ENCODE measurements at regions of chr1 and their contacts with region 1.

Region 1: GRCh38 chr1:1471389-1472052 is at the start of gene ATAD3B:
- H3K4me3 Mint-ChIP-seq: peak within 1 kb of the TSS; percentile 82
- H3K27ac Mint-ChIP-seq: peak within 1 kb of the TSS; percentile 86
- H3K4me1 Mint-ChIP-seq: peaks cover 29% of the 10 kb centered on the region
- H3K27me3 Mint-ChIP-seq: no peaks in the 10 kb centered on the region

Region 2: GRCh38 chr1:1349256-1350012 is 122.1 kb before region 1 on chr1 and contains the start of gene DVL1:
- intact Hi-C with region 1: no loop called
- H3K4me3 Mint-ChIP-seq: peak within 1 kb of the TSS; percentile 82
- H3K27ac Mint-ChIP-seq: peak within 1 kb of the TSS; percentile 66
- H3K4me1 Mint-ChIP-seq: peaks cover 55% of the 10 kb centered on the region
- H3K27me3 Mint-ChIP-seq: peaks cover 32% of the 10 kb centered on the region

Region 3: DNA sequence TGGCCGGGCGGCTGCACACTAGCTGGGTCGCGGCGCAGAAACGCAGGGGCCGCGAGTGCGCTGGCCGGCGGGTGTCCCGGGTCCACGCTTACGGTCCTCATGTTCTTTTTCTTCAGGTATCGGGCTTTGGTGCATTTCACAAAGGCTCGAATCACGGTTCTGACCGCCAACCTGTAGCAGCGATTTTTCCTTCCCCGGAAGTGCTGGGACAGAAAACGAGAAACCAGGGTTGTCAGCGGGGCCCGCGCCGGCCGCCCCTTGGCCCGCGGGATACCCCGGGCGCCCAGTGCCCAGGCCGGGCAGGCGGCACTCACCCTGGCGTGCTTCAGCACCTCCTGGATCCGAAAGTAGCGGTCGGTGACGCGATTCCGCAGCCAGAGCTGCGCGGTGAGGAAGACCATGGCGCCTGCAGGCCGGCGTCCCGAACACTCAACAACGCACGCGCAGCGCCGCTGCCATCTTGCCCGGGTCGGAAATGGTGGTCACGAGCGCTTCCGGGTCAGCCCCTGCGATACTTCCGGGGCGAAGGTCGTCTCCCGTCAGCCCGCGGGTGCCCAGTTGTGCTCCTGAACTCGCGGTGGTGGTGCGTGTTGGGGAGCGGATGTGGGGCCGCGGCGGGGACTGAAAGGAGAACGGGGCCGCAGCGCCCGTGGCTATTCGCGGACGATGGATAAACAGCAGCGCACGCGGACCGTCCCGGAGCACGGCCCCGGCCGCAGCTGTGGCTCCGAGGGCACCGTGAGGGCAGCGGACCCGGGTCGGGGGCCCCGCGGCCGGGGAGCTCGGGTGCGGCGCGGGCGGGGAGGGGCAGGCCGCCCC is 64.5 kb before region 1 on chr1 and contains the start of gene MRPL20:
- intact Hi-C with region 1: loop called (anchors 2 kb)
- H3K4me3 Mint-ChIP-seq: peak within 1 kb of the TSS; percentile 90
- H3K27ac Mint-ChIP-seq: peak within 1 kb of the TSS; percentile 93
- H3K4me1 Mint-ChIP-seq: peaks cover 42% of the 10 kb centered on the region
- H3K27me3 Mint-ChIP-seq: no peaks in the 10 kb centered on the region

Region 4: DNA sequence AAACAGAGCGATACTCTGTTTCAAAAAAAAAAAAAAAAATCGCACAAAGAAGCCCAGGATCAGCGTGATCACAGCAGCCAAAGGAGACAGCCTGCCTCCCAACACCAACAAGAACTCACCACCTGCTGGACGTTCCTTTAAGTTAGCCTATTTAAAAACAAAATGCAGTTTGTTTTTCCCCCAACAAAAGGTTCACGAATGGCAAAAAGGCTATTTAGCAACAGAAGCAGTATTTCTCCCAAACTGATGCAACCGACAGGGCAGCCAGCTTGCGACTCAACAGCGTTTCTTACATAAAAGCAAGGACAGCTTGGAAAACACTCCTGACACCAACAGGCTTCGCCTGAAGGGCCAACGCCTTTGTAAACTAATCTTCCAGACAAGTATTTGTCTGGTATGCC is 96.4 kb after region 1 on chr1:
- intact Hi-C with region 1: no loop called
- H3K4me3 Mint-ChIP-seq: no peak overlapping the region
- H3K27ac Mint-ChIP-seq: no peak overlapping the region
- H3K4me1 Mint-ChIP-seq: peaks cover 29% of the 10 kb centered on the region
- H3K27me3 Mint-ChIP-seq: no peaks in the 10 kb centered on the region

Measured in dendritic cell treated with granulocyte-macrophage colony-stimulating factor and Interleukin-4, amounts not matched to agents 40 ng/mL and 50 ng/mL, for 4 days (primary cell).